ENCODE measurements at regions of chr1 and their contacts with region 1.

Region 1: GRCh38 chr1:206634365-206635079 is 814 bp upstream of the DYRK3 start:
- DNase-seq: peak; percentile 79 to 98 (median 90)
- ATAC-seq: peak; percentile 65 to 79 (median 70)
- H3K4me3 ChIP-seq: peak overlapping the region; percentile 76 to 96 (median 86)
- H3K27ac ChIP-seq: peak overlapping the region; percentile 57 to 80 (median 73)
- H3K4me1 ChIP-seq: peaks cover 8 to 20% (median 9%) of the 10 kb centered on the region in 3 donors
- H3K27me3 ChIP-seq: no peaks in the 10 kb centered on the region
- CTCF ChIP-seq: peak; percentile 32 to 74 (median 70)

Region 2: DNA sequence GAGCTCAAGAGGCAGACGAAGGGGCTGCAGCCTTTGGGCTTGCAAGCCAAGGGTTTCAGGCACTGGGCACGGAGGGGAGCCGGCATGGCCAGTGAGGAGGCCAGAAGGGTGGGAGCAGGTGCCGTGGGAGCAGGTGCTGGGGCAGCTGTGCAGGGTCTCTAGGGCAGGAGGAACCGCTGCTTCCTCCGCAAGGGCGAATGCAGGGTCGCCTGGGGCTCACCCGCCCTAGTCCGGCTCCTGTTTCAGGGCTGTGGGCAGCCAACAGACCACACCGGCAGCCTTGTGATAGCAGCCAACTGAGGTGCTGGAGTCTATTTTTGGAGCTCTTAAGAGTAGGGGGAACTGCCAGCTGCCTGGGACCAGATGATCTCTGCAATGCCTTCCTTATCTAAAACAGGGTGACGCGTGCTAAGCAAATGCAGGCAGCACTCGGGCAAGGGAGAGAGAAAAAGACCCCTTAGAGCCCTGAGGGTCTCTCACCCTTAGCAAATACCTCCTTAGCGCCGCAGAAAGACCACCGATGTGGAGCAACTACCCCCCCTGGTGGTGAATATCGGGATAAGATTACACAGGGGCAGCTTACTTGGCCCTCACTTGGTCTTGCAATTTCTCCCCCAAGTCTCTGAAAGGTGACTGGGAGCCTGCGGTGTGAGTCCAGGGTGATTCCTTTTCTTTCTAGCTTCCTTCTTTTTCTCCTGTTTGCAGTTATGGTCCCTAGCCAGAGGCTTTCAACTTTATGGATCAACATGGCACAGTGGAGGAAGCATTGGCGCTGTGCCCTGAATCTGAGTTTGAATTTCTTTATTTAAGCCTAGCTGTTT is 29.5 kb after region 1 on chr1:
- intact Hi-C with region 1: loop called in 1 of 3 experiments (anchors 5 kb)
- DNase-seq: peak; percentile 42 to 74 (median 66)
- ATAC-seq: peak; percentile 57 to 81 (median 70)
- H3K4me3 ChIP-seq: peak overlapping the region in 1 of 4 donors; percentile 27
- H3K27ac ChIP-seq: no peak overlapping the region
- H3K4me1 ChIP-seq: peaks cover 11 to 18% (median 15%) of the 10 kb centered on the region in 3 donors
- H3K27me3 ChIP-seq: no peaks in the 10 kb centered on the region
- CTCF ChIP-seq: peak; percentile 74 to 86 (median 80)